ENCODE measurements at regions of chr6 and their contacts with region 1.

Region 1: GRCh38 chr6:51855310-51856082 is 231.9 kb downstream of the PKHD1 start:
- DNase-seq: peak; percentile 68

Region 2: GRCh38 chr6:51959744-51960383 is 104.4 kb after region 1 on chr6:
- in situ Hi-C with region 1: loop called (anchors 25 kb)
- DNase-seq: peak; percentile 67